Transverse colon (tissue), 4 donors: ENCODE measurements at regions of chr4 and their contacts with region 1.

Region 1: DNA sequence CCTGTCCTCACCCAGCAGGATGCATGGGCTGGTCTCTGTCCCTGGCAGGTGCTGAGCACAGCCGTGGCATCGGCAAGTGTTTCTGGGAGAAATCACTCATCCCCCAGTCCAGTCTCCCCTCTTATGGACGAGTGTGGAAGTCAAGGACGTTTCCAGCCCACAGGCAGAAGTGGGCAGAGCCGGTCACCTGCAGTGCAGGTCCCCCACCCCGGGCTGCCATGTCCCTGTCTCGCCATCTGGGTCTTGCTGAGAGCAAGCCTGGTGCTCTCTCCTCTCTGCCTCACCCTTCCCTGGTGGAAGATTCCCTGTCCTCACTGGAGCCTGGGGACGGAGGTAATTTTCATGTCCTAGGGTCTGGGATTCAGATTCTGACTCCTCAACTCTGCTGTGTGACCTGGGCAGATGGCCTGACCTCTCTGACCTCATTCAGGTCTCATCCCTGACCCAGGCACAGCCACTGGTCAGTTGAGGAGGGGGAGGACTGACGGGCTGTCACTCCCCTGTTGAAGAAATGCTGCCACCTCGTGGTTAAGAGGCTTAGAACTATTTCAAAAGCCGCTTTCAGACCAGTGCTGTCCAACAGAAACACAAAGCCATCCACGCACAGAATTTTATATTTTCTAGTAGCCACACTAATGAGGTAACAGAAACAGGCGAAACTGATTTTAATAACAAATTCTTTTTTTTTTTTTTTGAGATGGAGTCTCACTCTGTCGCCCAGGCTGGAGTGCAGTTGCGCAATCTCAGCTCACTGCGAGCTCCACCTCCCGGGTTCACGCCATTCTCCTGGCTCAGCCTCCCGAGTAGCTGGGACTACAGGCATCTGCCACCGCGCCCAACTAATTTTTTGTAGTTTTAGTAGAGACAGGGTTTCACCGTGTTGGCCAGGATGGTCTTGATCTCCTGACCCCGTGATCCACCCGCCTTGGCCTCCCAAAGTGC is 1.8 kb downstream of the CPZ start:
- DNase-seq: peak; percentile 47
- H3K4me3 ChIP-seq: no peak overlapping the region
- H3K27ac ChIP-seq: no peak overlapping the region
- H3K4me1 ChIP-seq: no peaks in the 10 kb centered on the region
- H3K27me3 ChIP-seq: peaks cover 39% of the 10 kb centered on the region
- CTCF ChIP-seq: peak; percentile 55 to 66 (median 64)
- EP300 ChIP-seq: no peak
- POLR2A ChIP-seq: no peak

Region 2: DNA sequence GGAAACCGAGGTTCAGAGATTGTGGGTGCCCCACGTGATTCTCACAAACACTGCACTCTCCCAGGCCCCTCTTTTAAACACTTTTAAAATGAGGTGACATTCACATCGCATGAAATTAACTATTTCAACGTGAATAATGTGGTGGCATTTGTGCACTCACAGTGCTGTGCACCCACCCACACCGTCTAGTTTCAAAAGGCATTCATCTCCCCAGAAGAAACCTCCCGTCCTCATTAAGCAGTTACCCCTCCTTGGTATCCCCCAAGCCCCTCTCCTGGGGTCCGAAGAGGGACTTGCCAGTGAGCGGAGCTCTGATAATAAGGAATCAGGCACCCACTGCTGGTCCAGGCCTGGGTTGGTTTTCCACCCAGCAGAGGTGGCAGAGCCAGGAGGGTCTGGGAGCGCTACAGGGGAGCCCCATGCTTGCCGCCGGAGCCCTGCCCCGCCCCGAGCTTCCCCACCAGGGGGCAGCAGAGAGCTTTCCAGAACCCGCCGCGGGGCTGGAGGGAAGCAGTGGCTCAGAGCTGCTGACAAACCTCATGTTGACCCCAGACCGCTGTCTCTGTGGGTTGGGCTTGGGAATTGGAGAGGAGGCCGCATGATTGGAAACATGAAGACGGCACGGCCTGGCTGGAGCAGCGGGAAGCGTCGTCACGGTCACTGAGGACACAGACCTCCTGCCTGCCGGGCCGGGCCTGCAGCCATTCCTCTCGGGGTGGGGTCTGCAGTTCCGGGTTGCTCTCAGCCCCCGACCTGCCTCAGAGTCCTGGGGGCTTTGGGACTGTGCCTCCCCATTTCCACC is 352.3 kb before region 1 on chr4:
- in situ Hi-C with region 1: loop called in 1 of 4 experiments (anchors 25 kb)
- intact Hi-C with region 1: no loop called
- DNase-seq: peak; percentile 83
- H3K4me3 ChIP-seq: no peak overlapping the region
- H3K27ac ChIP-seq: peak overlapping the region in 1 of 4 donors; percentile 33
- H3K4me1 ChIP-seq: peaks cover 0 to 16% (median 10%) of the 10 kb centered on the region in 4 donors
- H3K27me3 ChIP-seq: no peaks in the 10 kb centered on the region
- CTCF ChIP-seq: peak; percentile 89 to 98 (median 98)
- EP300 ChIP-seq: no peak
- POLR2A ChIP-seq: no peak

Region 3: DNA sequence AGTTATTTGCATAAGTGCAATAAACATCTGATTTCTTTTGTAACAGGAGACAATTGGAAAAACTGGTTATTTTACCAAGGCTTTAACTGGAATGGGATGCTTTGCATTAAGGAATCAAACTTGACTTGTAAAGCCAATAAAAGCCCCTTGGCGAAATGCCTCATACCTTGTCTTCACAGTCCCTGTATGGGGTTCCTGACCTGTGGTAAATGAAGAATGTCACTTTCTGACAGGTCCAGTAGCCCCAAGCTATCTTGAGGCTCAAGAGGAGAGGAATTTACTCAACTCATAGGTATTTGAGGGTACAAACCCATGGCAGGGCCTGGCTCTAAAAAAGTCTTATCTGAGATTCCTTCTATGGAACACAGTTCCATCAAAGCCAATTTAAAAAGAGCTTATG is 231.9 kb before region 1 on chr4:
- in situ Hi-C with region 1: no loop called
- intact Hi-C with region 1: no loop called
- DNase-seq: no peak
- H3K4me3 ChIP-seq: no peak overlapping the region
- H3K27ac ChIP-seq: no peak overlapping the region
- H3K4me1 ChIP-seq: no peaks in the 10 kb centered on the region
- H3K27me3 ChIP-seq: no peaks in the 10 kb centered on the region
- CTCF ChIP-seq: no peak
- EP300 ChIP-seq: no peak
- POLR2A ChIP-seq: no peak

Region 4: GRCh38 chr4:8439914-8440491 is 154.4 kb before region 1 on chr4:
- in situ Hi-C with region 1: no loop called
- intact Hi-C with region 1: no loop called
- DNase-seq: peak; percentile 26
- H3K4me3 ChIP-seq: peak overlapping the region; percentile 87 to 100 (median 96)
- H3K27ac ChIP-seq: peak overlapping the region; percentile 90 to 99 (median 98)
- H3K4me1 ChIP-seq: peaks cover 24 to 73% (median 37%) of the 10 kb centered on the region in 4 donors
- H3K27me3 ChIP-seq: no peaks in the 10 kb centered on the region
- CTCF ChIP-seq: no peak
- EP300 ChIP-seq: no peak
- POLR2A ChIP-seq: no peak

Region 5: GRCh38 chr4:8795774-8796495 is 201.6 kb after region 1 on chr4:
- in situ Hi-C with region 1: no loop called
- intact Hi-C with region 1: no loop called
- DNase-seq: no peak
- H3K4me3 ChIP-seq: no peak overlapping the region
- H3K27ac ChIP-seq: no peak overlapping the region
- H3K4me1 ChIP-seq: no peaks in the 10 kb centered on the region
- H3K27me3 ChIP-seq: no peaks in the 10 kb centered on the region
- CTCF ChIP-seq: no peak
- EP300 ChIP-seq: no peak
- POLR2A ChIP-seq: no peak